ENCODE measurements at regions of chr6 and their contacts with region 1.

Region 1: GRCh38 chr6:34161857-34162515 is 16.1 kb upstream of the GRM4 start:
- DNase-seq: peak; percentile 19
- H3K4me3 Mint-ChIP-seq: no peak overlapping the region
- H3K27ac Mint-ChIP-seq: no peak overlapping the region
- H3K4me1 Mint-ChIP-seq: no peaks in the 10 kb centered on the region
- H3K27me3 Mint-ChIP-seq: peaks cover 48% of the 10 kb centered on the region

Region 2: GRCh38 chr6:33950472-33950881 is 211.5 kb before region 1 on chr6:
- CTCF ChIA-PET with region 1: no interaction called
- DNase-seq: no peak
- H3K4me3 Mint-ChIP-seq: no peak overlapping the region
- H3K27ac Mint-ChIP-seq: no peak overlapping the region
- H3K4me1 Mint-ChIP-seq: peaks cover 5% of the 10 kb centered on the region
- H3K27me3 Mint-ChIP-seq: peaks cover 49% of the 10 kb centered on the region

Region 3: DNA sequence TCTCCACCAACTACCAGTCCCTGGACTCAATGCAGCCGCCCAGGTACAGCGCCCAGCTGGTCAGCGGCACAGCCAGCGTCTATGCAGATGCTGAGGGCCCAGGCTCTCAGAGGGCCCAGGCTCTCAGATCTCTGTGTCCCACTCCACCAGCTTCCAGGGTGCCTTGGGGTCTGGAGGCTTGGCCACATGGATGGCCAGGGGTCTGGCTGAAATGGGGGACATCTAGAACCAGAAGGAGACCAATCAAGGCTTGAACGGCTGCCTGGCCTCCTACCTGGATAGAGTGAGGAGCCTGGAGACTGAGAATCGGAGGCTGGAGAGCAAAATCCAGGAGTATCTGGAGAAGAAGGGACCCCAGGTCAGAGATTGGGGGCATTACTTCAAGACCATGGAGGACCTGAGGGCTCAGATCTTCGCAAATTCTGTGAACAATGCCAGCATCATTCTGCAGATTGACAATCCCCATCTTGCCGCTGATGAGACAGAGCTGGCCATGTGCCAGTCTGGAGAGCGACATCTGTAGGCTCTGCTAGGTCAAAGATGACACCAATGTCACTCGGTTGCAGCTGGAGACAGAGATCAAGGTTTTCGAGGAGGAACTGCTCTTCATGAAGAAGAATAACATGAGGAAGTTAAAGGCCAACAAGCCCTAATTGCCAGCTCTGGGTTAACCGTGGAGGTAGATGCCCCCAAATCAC is 28.0 kb after region 1 on chr6:
- CTCF ChIA-PET with region 1: interaction called, 27 read pairs
- DNase-seq: peak; percentile 51
- H3K4me3 Mint-ChIP-seq: no peak overlapping the region
- H3K27ac Mint-ChIP-seq: peak overlapping the region; percentile 59
- H3K4me1 Mint-ChIP-seq: peaks cover 6% of the 10 kb centered on the region
- H3K27me3 Mint-ChIP-seq: peaks cover 15% of the 10 kb centered on the region

Region 4: GRCh38 chr6:34414999-34415858 is 253.2 kb after region 1 on chr6:
- CTCF ChIA-PET with region 1: interaction called, 22 read pairs
- DNase-seq: peak; percentile 63
- H3K4me3 Mint-ChIP-seq: no peak overlapping the region
- H3K27ac Mint-ChIP-seq: no peak overlapping the region
- H3K4me1 Mint-ChIP-seq: peaks cover 11% of the 10 kb centered on the region
- H3K27me3 Mint-ChIP-seq: no peaks in the 10 kb centered on the region